Activated B cell treated with CpG ODN at 0.5 μM for 24 hours (primary cell): ENCODE measurements at regions of chr4 and their contacts with region 1.

Region 1: GRCh38 chr4:2241410-2242353 is at the starts of genes HAUS3 and POLN:
- DNase-seq: peak; percentile 99
- ATAC-seq: peak; percentile 96
- H3K4me3 Mint-ChIP-seq: peak within 1 kb of the TSS; percentile 91
- H3K27ac Mint-ChIP-seq: peak within 1 kb of the TSS; percentile 86
- H3K4me1 Mint-ChIP-seq: peaks cover 54% of the 10 kb centered on the region
- H3K27me3 Mint-ChIP-seq: no peaks in the 10 kb centered on the region
- CTCF ChIP-seq: no peak
- total RNA-seq, gene HAUS3: 17.9 and 19.0 TPM in 2 replicates
- total RNA-seq, gene POLN: 1.4 and 1.7 TPM in 2 replicates

Region 2: DNA sequence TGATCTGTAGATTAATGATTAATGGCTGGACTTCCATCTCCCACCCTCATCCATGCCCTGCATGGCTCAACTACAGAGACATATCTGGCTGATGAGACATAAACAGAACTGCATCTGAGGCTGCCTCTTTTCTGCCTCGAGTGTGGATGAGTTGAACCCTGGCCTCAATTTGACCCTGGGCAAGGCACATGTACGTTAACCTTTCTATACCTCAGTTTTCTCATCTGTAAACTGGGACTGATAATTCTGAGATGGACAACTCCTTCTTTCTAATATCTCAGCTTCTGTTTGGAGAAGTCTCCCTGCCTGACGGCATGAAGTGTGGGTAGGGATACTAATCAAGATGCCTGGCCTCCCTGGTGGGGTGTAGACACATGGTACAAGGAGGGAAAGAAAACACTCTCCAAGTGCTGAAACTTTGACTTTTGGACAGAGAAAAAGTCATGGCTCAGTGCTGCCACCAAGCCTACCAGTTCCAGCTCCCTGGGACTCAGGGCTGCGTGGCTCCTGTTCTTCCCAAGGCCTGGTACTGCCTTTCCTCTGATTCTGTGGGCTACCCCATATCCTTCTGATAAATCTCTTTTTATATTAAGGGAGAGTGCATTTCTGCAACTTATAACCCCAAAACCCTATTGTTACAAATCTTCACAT is 64.1 kb before region 1 on chr4:
- CTCF ChIA-PET with region 1: no interaction called
- POLR2A ChIA-PET with region 1: no interaction called
- intact Hi-C with region 1: no loop called
- DNase-seq: no peak
- ATAC-seq: no peak
- H3K4me3 Mint-ChIP-seq: no peak overlapping the region
- H3K27ac Mint-ChIP-seq: no peak overlapping the region
- H3K4me1 Mint-ChIP-seq: no peaks in the 10 kb centered on the region
- H3K27me3 Mint-ChIP-seq: no peaks in the 10 kb centered on the region
- CTCF ChIP-seq: no peak

Region 3: DNA sequence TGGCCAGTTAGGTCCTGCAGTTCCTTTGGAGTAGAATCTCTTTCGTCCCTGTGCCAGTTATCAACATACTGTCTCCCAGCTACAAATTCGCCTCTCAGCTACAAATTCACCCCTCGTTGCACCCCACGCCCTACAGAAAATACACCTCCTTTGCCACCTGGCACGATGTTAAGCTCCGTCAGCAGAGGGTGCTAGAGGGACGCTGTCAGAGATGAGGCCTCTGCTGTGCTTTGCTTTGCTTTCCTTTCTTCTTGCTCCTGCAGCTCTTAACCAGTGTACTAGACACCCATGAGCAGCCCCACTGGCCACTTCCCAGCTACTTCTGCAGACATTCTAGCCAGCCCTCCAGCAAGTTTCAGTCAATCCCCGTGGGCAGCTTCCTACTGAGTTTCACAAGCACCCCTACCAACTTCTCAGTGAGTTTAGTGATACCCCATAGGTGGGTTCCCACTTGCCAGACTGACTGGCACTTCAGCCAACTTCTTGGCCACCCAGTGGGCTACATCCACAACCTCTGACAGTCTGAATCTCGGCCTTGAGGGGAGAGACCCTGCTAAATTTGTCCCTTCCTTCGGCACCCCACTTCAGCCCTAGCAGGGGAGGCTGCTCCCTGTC is 21.6 kb before region 1 on chr4:
- CTCF ChIA-PET with region 1: interaction called, 19 read pairs
- POLR2A ChIA-PET with region 1: interaction called, 3 read pairs
- intact Hi-C with region 1: loop called (anchors 2 kb)
- DNase-seq: peak; percentile 62
- ATAC-seq: peak; percentile 97
- H3K4me3 Mint-ChIP-seq: no peak overlapping the region
- H3K27ac Mint-ChIP-seq: no peak overlapping the region
- H3K4me1 Mint-ChIP-seq: peaks cover 4% of the 10 kb centered on the region
- H3K27me3 Mint-ChIP-seq: no peaks in the 10 kb centered on the region
- CTCF ChIP-seq: peak; percentile 94

Region 4: GRCh38 chr4:2296631-2297601 is 55.2 kb after region 1 on chr4:
- CTCF ChIA-PET with region 1: no interaction called
- POLR2A ChIA-PET with region 1: no interaction called
- intact Hi-C with region 1: loop called (anchors 1 kb)
- DNase-seq: peak; percentile 12
- ATAC-seq: no peak
- H3K4me3 Mint-ChIP-seq: no peak overlapping the region
- H3K27ac Mint-ChIP-seq: no peak overlapping the region
- H3K4me1 Mint-ChIP-seq: peaks cover 16% of the 10 kb centered on the region
- H3K27me3 Mint-ChIP-seq: no peaks in the 10 kb centered on the region
- CTCF ChIP-seq: no peak

Region 5: DNA sequence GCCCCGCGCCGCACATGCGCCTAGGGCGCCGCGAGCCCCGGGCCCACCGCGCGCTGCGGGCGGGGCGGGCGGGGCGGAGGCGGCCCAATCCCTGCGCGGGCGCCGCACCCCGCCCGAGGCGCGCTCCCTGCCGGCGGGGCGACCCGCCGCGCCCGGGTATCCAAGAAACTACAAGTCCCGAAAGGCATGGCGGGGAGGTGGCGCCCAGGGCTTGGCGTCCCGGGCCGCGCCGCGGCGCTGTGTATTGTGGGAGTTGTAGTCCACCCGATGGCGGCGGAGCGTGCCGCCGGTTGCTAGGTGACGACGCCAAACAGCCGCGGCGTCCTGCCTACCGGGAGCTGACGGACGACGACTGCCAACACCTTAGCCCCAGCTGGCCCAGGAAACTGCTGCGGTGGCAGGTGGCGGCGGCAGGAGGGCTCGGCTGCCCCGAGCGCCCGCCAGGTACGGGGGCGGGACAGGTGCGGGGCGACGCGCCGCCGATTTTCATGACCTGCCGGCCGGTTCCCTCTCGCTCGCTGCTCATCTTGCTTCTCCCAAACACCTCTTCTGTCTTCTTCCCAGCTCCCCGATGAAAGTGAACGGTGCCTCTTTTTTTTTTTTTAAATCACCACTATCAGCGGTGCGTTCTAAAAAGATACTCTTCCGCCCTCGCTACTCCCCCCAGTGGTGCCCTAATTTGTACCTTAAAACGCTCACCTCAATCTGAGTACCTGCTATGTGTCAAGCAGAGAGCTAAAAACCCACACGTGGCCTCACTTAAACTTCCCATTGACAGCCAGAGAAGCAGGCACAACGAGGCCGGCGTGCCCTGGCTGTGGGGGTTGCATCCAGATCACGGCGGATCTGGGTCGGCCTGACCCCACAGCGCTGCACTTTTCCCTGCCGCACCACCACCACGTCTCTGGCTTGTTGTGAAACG is 177.2 kb after region 1 on chr4 and contains the start of gene CFAP99:
- CTCF ChIA-PET with region 1: interaction called, 3 read pairs
- POLR2A ChIA-PET with region 1: interaction called, 5 read pairs
- intact Hi-C with region 1: loop called (anchors 1 kb)
- DNase-seq: peak; percentile 93
- ATAC-seq: peak; percentile 91
- H3K4me3 Mint-ChIP-seq: peak within 1 kb of the TSS; percentile 91
- H3K27ac Mint-ChIP-seq: peak within 1 kb of the TSS; percentile 90
- H3K4me1 Mint-ChIP-seq: peaks cover 39% of the 10 kb centered on the region
- H3K27me3 Mint-ChIP-seq: peaks cover 28% of the 10 kb centered on the region
- CTCF ChIP-seq: no peak
- total RNA-seq, gene CFAP99: not detected in 2 replicates

Region 6: DNA sequence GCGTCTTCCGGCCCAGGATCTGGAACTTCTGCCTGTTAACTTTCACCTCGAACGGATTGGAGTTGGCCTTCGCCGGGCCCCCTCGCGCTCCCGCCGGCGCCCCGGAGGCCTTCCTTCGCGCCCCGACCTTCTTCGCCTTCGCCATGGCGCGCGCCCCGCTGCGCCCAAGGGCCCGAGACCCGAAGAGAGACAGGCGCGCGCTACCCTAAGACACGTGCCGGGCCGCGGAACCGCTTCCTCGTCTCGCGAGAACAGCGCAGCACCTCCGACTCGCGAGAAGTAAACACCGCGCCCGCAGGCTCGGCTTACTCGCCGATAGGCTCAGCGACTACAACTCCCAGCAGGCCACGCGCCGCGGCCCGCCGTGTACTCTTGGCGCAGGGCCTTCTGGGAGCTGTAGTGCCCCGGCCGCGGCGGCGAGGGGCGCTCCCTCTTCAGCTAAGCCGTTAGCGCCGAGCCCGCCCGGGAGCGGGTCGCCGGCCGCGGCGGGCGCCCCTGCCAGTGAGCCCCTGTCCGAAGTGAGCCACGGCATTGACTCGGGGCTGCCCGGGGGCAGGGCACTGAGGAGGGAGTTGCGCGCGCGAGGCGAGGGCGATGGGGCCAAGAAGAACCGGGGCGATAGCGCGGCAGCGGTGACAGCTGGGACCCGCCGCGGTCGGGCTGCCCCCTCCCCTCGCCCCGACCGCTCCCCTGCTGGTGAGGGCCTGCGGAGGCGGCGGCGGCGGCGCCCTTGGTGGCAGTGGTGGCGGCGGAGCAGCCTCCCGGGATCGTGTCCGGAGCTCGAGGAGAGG is 721.7 kb after region 1 on chr4 and contains the starts of genes GRK4 and NOP14:
- CTCF ChIA-PET with region 1: no interaction called
- POLR2A ChIA-PET with region 1: interaction called, 3 read pairs
- intact Hi-C with region 1: loop called (anchors 10 kb)
- DNase-seq: peak; percentile 89
- ATAC-seq: peak; percentile 91
- H3K4me3 Mint-ChIP-seq: peak within 1 kb of the TSS; percentile 91
- H3K27ac Mint-ChIP-seq: peak within 1 kb of the TSS; percentile 92
- H3K4me1 Mint-ChIP-seq: peaks cover 29% of the 10 kb centered on the region
- H3K27me3 Mint-ChIP-seq: no peaks in the 10 kb centered on the region
- CTCF ChIP-seq: no peak
- total RNA-seq, gene GRK4: 1.4 and 2.1 TPM in 2 replicates
- total RNA-seq, gene NOP14: 56.3 and 57.3 TPM in 2 replicates